ENCODE measurements at regions of chr1 and their contacts with region 1.

Region 1: DNA sequence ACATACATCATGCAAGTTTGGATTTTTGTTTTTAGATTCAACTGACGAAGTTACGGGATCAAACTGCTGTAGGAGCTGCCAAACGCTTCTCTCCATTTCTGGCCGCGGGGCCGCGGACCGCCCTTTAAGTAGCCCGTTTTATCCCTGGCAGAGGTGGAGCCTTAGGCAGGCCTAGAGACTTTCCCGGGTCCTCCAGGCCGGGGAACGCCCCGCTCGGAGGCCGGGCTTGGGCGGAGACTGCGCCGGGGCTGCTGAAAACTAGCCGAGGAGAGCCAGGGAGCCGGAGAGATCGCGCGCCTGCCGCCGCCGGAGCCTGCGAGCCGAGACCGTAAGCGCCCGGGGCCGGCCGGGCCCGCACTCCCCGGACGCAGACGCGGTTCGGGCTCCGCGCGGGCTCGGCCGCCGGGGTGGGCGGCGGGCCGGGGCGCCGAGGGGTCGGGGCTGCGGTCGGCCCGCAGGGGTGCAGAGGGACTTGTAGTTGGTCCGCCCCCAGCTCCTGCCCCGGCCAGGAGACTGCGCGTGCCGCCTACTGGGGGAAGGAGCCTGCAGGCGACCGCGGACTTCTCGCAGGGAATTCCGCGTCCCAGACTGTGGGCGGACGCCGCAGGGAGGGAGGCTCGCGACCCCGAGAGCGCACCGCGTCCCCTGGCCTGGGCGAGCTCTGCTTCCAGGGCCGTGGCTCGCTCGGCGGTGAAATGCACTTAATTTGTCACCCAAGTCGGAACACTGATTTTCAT is at the start of gene EPHX1:
- DNase-seq: peak; percentile 94
- ATAC-seq: peak; percentile 87 to 93
- total RNA-seq, gene EPHX1: 59.6 to 126 TPM

Region 2: GRCh38 chr1:225845571-225846259 is 35.7 kb after region 1 on chr1:
- intact Hi-C with region 1: loop called in 1 of 2 experiments (anchors 5 kb)
- DNase-seq: peak; percentile 86
- ATAC-seq: peak; percentile 74 to 79